ENCODE measurements at regions of chr12 and their contacts with region 1.

Region 1: DNA sequence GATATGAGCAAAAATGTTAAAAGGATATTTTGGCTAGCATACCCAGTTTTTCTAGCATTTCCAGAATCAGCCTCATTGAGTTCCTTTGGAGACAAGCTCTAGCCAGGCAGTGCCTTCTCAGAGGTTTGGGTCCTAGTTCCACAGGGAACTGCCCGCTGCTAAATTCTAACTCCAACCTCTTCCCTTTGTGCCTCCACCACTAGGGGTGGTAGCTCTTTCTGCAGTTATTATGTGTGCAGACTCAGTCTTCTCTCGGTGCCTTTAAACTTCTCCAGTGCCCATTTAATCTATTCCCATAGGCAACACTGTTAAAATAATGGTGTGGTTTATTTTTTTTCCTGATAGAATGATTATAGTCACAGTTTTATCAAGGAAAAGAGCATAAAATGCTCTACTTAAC is 21.5 kb upstream of the SLC25A3 start:
- DNase-seq: no peak
- ATAC-seq: peak; percentile 94
- H3K4me3 Mint-ChIP-seq: no peak overlapping the region
- H3K27ac Mint-ChIP-seq: no peak overlapping the region
- H3K4me1 Mint-ChIP-seq: no peaks in the 10 kb centered on the region
- H3K27me3 Mint-ChIP-seq: no peaks in the 10 kb centered on the region
- CTCF ChIP-seq: no peak

Region 2: DNA sequence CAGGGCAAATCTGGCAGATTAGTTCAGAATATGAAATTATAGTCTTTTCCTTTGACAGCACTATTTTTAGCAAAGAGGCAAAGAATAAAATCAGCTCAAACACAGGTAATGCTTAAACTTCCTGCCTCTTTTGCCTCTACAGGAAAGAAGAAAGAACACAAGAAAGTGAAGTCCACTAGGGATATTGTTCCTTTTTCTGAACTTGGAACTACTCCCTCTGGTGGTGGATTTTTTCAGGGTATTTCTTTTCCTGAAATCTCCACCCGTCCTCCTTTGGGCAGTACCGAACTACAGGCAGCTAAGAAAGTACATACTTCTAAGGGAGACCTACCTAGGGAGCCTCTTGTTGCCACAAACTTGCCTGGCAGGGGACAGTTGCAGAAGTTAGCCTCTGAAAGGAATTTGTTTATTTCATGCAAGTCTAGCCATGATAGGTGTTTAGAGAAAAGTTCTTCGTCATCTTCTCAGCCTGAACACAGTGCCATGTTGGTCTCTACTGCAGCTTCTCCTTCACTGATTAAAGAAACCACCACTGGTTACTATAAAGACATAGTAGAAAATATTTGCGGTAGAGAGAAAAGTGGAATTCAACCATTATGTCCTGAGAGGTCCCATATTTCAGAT is 39.2 kb before region 1 on chr12:
- CTCF ChIA-PET with region 1: interaction called, 10 read pairs
- POLR2A ChIA-PET with region 1: no interaction called
- DNase-seq: no peak
- ATAC-seq: peak; percentile 83
- H3K4me3 Mint-ChIP-seq: no peak overlapping the region
- H3K27ac Mint-ChIP-seq: no peak overlapping the region
- H3K4me1 Mint-ChIP-seq: no peaks in the 10 kb centered on the region
- H3K27me3 Mint-ChIP-seq: no peaks in the 10 kb centered on the region
- CTCF ChIP-seq: peak; percentile 68

Region 3: DNA sequence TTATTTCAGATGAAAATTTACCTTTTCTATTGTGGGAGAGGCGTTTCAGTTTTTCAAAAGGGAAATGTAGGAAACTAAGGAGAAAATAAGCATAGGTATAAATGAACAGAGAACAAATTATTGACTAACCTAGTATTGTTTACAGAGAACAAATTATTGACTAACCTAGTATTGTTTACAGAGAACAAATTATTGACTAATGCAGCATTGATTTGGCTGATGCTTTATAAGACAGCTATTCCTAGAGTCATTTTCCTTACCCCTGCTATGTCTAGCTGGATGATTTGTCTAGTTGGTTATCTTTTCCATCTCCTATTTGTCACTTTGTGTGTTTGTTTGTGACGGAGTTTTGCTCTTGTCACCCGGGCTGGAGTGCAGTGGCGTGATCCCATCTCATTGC is 34.0 kb before region 1 on chr12:
- CTCF ChIA-PET with region 1: interaction called, 13 read pairs
- POLR2A ChIA-PET with region 1: no interaction called
- DNase-seq: no peak
- ATAC-seq: no peak
- H3K4me3 Mint-ChIP-seq: no peak overlapping the region
- H3K27ac Mint-ChIP-seq: peak overlapping the region; percentile 62
- H3K4me1 Mint-ChIP-seq: peaks cover 8% of the 10 kb centered on the region
- H3K27me3 Mint-ChIP-seq: no peaks in the 10 kb centered on the region
- CTCF ChIP-seq: no peak

Region 4: DNA sequence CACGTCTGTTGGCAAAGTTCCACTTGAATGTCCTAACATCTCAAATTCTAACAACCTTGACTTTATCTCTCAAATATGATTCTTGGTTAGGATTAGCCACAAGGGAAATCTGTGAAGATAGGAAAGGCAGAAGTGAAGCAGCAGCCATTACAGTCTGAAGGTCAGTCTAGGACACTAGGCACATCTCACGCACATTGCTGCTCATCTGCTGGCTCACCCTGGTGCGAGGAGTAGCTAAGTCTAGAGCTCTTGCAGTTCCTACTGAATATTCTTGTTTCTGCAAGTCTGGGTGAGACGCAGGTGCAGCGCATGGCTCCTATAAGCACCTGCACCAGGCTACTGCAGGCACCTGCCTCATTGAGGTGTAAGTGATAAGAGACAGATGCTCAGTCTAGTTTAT is 15.1 kb after region 1 on chr12:
- CTCF ChIA-PET with region 1: interaction called, 16 read pairs
- POLR2A ChIA-PET with region 1: no interaction called
- DNase-seq: no peak
- ATAC-seq: no peak
- H3K4me3 Mint-ChIP-seq: no peak overlapping the region
- H3K27ac Mint-ChIP-seq: no peak overlapping the region
- H3K4me1 Mint-ChIP-seq: no peaks in the 10 kb centered on the region
- H3K27me3 Mint-ChIP-seq: no peaks in the 10 kb centered on the region
- CTCF ChIP-seq: no peak

Region 5: DNA sequence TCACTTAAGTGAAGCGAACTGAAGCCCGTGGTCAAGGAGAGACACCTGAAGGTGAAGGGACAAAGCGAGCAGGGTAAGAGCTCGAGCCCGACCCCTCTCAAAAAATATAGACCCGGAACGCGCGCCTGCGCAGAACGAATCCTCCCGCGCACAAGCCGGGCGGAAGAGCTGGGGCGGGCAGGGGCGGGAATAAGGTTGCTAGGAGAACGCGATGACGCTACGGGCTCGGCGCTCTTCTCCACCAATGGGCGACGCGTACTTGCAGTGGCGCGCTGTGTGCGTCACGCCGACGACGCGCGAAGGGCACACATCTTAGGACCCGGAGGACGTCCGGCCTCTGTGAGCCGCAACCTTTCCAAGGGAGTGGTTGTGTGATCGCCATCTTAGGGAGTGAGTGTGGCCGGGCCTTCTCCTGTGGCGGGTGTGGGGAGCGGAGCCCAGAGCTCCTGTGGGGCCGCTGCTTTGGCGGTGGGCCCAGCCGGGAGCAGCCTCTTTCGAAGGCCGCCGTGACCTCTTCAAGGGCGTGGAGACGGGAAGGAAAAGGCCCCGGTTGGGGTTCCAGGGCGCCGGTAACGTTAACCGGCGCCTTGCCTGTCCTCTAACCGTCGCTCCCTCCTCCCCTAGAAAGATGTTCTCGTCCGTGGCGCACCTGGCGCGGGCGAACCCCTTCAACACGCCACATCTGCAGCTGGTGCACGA is 21.5 kb after region 1 on chr12 and contains the start of gene SLC25A3:
- CTCF ChIA-PET with region 1: interaction called, 20 read pairs
- POLR2A ChIA-PET with region 1: interaction called, 8 read pairs
- DNase-seq: peak; percentile 95
- ATAC-seq: peak; percentile 97
- H3K4me3 Mint-ChIP-seq: peak within 1 kb of the TSS; percentile 98
- H3K27ac Mint-ChIP-seq: peak within 1 kb of the TSS; percentile 99
- H3K4me1 Mint-ChIP-seq: peaks cover 22% of the 10 kb centered on the region
- H3K27me3 Mint-ChIP-seq: no peaks in the 10 kb centered on the region
- CTCF ChIP-seq: no peak
- total RNA-seq, gene SLC25A3: 716 to 733 TPM (median 726 TPM) in 3 replicates

Region 6: DNA sequence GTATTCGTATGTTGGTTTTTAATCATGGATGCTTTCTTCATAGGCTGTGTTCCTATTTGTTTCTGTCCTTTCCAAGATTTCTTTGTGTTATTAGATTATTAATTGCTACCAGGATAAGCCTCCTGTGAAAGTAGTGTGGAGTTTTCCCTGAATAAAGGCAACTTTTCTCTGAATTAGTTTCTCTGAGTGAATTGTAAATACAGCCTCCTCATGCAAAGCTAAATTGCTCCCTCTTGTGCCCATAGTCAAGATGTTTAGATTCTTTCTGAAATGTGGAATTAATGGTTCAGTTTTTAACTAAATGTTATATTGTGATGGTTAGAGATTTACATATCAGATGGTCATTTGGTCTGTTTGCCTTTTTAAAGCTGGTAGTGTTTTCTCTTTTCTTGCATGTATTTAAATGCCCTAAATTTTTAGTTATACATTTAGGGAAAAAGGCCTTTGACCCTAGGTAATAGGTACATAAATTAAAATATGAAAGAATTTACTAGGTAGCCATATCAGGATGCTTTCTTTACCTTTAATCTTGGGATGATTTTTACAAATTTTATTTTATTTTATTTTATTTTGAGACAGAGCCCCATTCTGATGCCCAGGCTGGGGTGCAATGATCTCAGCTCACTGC is 82.0 kb after region 1 on chr12:
- CTCF ChIA-PET with region 1: interaction called, 15 read pairs
- POLR2A ChIA-PET with region 1: no interaction called
- DNase-seq: no peak
- ATAC-seq: peak; percentile 34
- H3K4me3 Mint-ChIP-seq: no peak overlapping the region
- H3K27ac Mint-ChIP-seq: no peak overlapping the region
- H3K4me1 Mint-ChIP-seq: no peaks in the 10 kb centered on the region
- H3K27me3 Mint-ChIP-seq: no peaks in the 10 kb centered on the region
- CTCF ChIP-seq: no peak; the same call in 1 of the 2 replicates

Measured in WTC11 (cell line).